Activated naive CD4-positive, alpha-beta T cell treated with anti-CD3 and anti-CD28 coated beads for 36 hours (primary cell): ENCODE measurements at regions of chrX and their contacts with region 1.

Region 1: DNA sequence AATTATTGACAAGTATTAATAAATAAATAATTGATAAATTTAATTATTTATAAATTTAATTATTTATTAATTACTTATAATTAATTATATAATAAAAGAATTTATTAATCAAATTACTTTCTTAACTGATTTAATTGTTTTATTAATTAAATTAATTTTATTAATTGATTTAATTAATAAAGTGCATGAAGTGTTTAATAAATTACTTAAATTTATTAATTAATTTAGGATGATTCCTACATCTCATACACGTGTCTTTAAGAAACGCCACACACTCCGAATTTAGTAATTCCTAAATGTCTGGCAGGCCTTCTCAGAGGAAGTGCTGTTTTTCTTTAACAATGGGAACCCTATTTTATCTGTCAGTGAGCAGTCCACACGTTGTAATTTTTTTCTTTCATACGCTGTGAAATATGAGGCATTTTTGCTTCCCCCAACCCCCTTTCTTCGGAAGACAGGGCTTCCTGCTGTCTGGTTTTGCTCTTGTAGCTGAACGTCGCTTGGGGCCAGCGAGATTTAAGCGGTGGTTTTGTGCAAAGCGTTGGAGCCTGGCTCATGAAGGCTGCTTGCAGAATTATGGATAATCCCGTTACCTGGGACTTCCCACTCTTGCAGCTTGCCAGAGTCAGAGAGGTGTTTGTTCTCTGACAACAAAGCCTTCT is 46.8 kb downstream of the CRLF2 start:
- DNase-seq: peak; percentile 48
- H3K4me3 Mint-ChIP-seq: peak overlapping the region; percentile 10
- H3K27ac Mint-ChIP-seq: no peak overlapping the region
- H3K4me1 Mint-ChIP-seq: peaks cover 16% of the 10 kb centered on the region
- H3K27me3 Mint-ChIP-seq: peaks cover 15% of the 10 kb centered on the region

Region 2: DNA sequence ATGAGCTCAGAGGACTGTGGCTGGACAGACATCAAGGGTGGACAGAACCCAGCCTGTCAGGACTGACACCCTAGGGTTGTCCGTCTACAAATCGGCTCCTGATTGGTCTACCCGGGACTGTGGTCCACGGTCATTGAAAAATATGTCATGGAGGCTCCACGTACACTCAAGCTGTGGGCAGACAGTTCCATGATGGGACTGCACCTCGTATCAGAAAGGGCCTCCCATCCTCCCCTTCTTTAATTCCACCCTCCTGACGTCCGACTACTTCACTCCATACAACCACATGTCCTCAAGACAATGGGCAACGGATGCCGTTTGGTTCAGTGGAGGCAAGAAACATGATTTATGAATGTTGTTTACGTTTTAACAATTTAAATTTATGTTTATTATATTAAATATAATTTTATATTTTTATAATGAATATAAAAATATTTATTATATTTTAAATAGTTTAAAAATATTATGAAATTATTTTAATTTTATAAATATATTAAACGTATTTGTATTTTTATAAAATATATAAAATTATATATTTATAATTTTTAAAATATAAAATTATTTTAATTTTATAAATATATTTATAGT is 593.0 kb before region 1 on chrX:
- CTCF ChIA-PET with region 1: no interaction called
- intact Hi-C with region 1: loop called (anchors 5 kb)
- DNase-seq: peak; percentile 10
- H3K4me3 Mint-ChIP-seq: no peak overlapping the region
- H3K27ac Mint-ChIP-seq: no peak overlapping the region
- H3K4me1 Mint-ChIP-seq: no peaks in the 10 kb centered on the region
- H3K27me3 Mint-ChIP-seq: no peaks in the 10 kb centered on the region

Region 3: DNA sequence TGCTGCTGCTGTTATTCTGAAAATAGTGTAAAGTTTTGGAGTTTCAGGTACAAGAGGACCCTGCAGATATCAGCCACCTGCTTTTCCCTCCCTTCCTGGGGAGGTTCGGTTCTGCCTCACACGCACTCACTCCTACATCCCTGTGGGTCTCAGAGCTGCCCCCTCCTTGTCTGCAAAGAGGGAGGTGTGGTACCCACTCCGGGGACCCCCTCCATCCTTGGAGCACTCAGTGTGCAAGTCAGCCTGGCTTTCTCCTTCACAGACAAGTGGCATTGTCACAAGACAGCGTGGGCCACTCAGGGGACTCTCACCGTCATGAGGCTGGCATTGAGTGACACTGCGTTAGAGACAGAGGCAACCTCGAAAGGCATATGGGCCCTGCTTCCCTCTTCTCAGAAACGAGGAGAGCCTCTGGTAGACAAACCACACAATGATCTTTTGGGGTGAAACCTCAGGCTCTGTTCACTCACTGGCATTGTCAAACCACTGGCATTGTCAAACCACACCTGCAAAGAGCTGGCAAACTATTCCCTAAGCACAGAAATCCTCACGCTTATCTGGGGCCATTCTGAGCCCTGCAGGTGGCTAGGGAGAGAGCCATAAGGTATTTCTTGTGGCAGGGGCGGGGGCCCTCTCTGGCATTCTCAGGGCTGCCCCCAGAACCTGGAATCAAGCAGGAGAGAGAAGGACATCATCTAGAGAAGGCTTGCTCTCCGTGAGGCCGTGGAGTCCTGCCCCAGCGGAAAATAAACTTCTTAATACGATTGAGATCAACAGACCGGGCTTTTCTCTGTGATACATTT is 250.0 kb before region 1 on chrX:
- CTCF ChIA-PET with region 1: no interaction called
- intact Hi-C with region 1: loop called (anchors 5 kb)
- DNase-seq: peak; percentile 50
- H3K4me3 Mint-ChIP-seq: no peak overlapping the region
- H3K27ac Mint-ChIP-seq: no peak overlapping the region
- H3K4me1 Mint-ChIP-seq: no peaks in the 10 kb centered on the region
- H3K27me3 Mint-ChIP-seq: no peaks in the 10 kb centered on the region

Region 4: GRCh38 chrX:1178580-1179057 is 13.0 kb after region 1 on chrX:
- CTCF ChIA-PET with region 1: no interaction called
- intact Hi-C with region 1: loop called (anchors 1 kb)
- DNase-seq: peak; percentile 11
- H3K4me3 Mint-ChIP-seq: no peak overlapping the region
- H3K27ac Mint-ChIP-seq: no peak overlapping the region
- H3K4me1 Mint-ChIP-seq: no peaks in the 10 kb centered on the region
- H3K27me3 Mint-ChIP-seq: no peaks in the 10 kb centered on the region

Region 5: DNA sequence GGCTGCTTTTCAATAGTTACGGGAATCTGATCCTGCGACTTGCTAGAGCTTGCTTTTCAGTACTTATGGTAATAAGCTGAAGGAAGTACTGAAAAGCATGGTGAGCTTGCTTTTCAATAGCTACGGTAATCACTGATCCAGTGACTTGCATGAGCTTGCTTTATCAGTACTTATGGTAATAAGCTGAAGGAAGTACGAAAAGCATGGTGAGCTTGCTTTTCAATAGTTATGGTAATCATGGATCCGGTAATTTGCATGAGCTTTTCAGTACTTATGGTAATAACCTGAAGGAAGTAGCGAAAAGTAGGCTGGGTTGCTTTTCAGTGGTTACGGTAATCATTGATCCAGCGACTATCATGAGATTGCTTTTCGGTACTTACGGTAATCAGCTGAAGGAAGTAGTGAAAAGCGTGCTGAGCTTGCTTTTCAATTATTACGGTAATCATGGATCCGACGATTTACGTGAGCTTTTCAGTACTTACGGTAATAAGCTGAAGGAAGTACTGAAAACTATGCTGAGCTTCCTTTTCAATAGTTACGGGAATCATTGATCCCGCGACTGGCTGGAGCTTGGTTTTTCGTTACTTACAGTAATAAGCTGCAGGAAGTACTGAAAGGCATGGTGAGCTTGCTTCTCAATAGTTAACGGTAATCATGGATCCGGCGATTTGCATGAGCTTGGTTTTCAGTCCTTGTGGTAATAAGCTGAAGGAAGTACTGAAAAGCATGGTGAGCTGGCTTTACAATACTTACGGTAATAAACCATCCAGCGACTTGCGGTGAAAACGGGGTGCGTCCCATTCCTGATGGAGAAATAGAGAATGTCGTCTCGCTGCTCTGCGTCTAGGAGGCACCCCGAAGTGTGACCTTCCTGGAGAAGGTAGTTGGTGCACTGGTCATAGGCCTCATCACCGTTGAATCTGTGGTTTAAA is 40.3 kb after region 1 on chrX:
- CTCF ChIA-PET with region 1: no interaction called
- intact Hi-C with region 1: loop called (anchors 5 kb)
- DNase-seq: peak; percentile 67
- H3K4me3 Mint-ChIP-seq: peak overlapping the region; percentile 72
- H3K27ac Mint-ChIP-seq: peak overlapping the region; percentile 72
- H3K4me1 Mint-ChIP-seq: peaks cover 17% of the 10 kb centered on the region
- H3K27me3 Mint-ChIP-seq: no peaks in the 10 kb centered on the region